GM12878 (cell line): ENCODE measurements at regions of chr10 and their contacts with region 1.

Region 1: GRCh38 chr10:62000037-62000603 is 98.6 kb downstream of the ARID5B start:
- DNase-seq: peak; percentile 90
- ATAC-seq: peak; percentile 86
- H3K4me3 ChIP-seq: peak overlapping the region; percentile 49
- H3K27ac ChIP-seq: peak overlapping the region; percentile 96
- H3K4me1 ChIP-seq: peaks cover 45% of the 10 kb centered on the region
- H3K27me3 ChIP-seq: no peaks in the 10 kb centered on the region
- CTCF ChIP-seq: no peak
- EP300 ChIP-seq: peak; percentile 100
- POLR2A ChIP-seq: peak; percentile 69
- RAD21 ChIP-seq: peak; percentile 15; the same call in 1 of the 2 replicates

Region 2: DNA sequence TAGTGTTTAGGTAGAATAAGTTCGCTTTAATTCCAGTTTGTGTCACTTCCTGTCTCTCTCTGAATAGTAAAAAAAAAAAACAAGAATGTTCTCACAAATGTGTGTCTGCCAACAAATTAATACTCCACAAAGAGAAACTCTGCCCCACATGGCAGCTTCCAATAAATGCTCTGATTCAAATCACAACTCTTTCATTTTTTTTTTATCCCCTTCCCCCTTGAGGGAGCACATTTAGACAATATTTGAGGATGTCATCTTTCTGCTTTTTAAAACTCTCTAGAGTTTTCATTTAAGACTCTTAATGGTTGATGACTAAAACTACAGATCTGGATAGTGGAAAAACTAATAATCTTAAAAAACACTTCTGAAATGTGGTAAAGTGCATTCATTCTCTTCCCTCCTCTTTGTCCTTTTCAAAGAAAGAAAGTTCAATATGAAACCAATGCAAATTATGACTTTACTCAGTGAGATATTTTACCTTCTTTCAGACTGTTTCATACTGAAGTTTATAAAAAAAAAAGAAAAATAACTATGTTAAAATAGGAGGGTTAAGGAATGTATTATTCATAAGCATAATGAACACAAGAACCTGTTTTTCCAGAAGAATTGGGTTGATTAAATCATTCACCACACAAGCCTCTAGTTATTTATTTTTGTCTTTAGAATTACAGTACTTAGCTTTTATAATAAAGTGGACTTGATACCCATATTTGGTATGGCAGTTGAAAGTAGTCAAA is 56.3 kb before region 1 on chr10:
- CTCF ChIA-PET with region 1: no interaction called
- POLR2A ChIA-PET with region 1: no interaction called
- RAD21 ChIA-PET with region 1: no interaction called
- SMC1A ChIA-PET with region 1: interaction called, 3 read pairs
- in situ Hi-C with region 1: no loop called
- intact Hi-C with region 1: loop called (anchors 2 kb)
- DNase-seq: no peak
- ATAC-seq: peak; percentile 73
- H3K4me3 ChIP-seq: 0 out of 2 replicates have a peak overlapping the region, but pooled peaks have one; percentile 53
- H3K27ac ChIP-seq: peak overlapping the region; percentile 97
- H3K4me1 ChIP-seq: peaks cover 52% of the 10 kb centered on the region
- H3K27me3 ChIP-seq: no peaks in the 10 kb centered on the region
- CTCF ChIP-seq: peak in 1 of 3 experiments; percentile 11; a peak in 1 of 6 replicates
- EP300 ChIP-seq: peak in 1 of 2 experiments; percentile 63; a peak in 1 of 4 replicates
- POLR2A ChIP-seq: no peak
- RAD21 ChIP-seq: peak; percentile 42; the same call in 1 of the 2 replicates

Region 3: DNA sequence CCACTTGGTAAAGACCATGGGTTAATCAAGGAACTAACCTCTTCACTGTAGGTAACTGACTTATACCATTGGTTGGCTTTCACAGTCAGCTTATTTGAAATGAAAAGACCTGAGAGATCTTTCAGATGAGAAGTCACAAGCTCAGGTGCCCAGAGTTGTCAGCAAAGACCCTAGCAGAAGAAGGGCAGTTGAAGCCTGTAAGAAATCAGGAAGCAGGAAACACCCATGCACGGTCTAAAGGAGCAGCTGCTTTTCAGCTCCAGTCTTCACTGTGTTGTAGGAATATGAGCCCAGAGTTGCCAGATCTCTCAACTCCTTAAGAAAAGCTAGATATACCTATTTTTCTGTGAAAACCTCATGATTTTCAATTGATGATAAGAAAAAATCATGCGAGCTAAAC is 31.4 kb after region 1 on chr10:
- CTCF ChIA-PET with region 1: no interaction called
- POLR2A ChIA-PET with region 1: no interaction called
- RAD21 ChIA-PET with region 1: no interaction called
- SMC1A ChIA-PET with region 1: no interaction called
- in situ Hi-C with region 1: no loop called
- intact Hi-C with region 1: no loop called
- DNase-seq: no peak
- ATAC-seq: no peak
- H3K4me3 ChIP-seq: no peak overlapping the region
- H3K27ac ChIP-seq: no peak overlapping the region
- H3K4me1 ChIP-seq: no peaks in the 10 kb centered on the region
- H3K27me3 ChIP-seq: no peaks in the 10 kb centered on the region
- CTCF ChIP-seq: no peak
- EP300 ChIP-seq: no peak
- POLR2A ChIP-seq: no peak
- RAD21 ChIP-seq: no peak